Activated CD4-positive, alpha-beta T cell treated with anti-CD3 and anti-CD28 coated beads for 36 hours (primary cell): ENCODE measurements at regions of chr9 and their contacts with region 1.

Region 1: DNA sequence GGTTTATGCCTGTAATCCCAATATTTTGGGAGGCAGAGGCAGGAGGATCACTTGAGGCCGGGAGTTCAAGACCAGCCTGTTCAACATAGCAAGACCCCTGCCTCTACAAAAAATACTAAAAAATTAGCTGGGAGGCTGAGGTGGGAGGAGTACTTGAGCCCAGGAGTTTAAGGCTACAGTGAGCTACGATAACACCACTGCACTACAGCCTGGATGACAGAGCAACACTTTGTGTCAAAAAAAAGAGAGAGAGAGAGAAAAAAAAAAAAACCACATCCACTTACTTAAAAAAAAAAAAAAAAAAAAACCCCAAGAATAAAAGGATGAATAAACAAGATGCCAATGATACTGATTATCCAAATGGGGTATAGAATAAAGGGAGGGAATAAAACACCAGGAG is 14.4 kb downstream of the CARNMT1 start:
- DNase-seq: no peak
- ATAC-seq: no peak
- H3K4me3 Mint-ChIP-seq: no peak overlapping the region
- H3K27ac Mint-ChIP-seq: no peak overlapping the region
- H3K4me1 Mint-ChIP-seq: peaks cover 35% of the 10 kb centered on the region
- H3K27me3 Mint-ChIP-seq: no peaks in the 10 kb centered on the region

Region 2: DNA sequence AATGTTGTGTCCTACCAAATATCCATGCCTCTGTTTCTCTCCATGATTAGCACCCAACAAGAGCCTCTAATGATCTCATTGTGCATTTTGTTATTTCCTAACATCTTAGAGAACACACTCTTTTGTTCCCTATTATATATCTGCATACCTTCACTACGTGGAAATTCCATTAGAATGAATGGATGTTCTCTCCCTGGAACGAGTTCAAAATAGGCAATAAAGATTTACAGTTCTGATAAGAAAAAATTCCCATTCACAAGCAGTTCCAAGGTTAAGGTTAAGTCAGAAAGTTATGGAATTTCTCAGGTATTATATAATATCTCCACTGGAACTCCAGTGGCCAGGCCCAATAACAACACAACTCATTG is 209.7 kb before region 1 on chr9:
- CTCF ChIA-PET with region 1: no interaction called
- POLR2A ChIA-PET with region 1: no interaction called
- intact Hi-C with region 1: no loop called
- DNase-seq: no peak
- ATAC-seq: no peak
- H3K4me3 Mint-ChIP-seq: no peak overlapping the region
- H3K27ac Mint-ChIP-seq: no peak overlapping the region
- H3K4me1 Mint-ChIP-seq: no peaks in the 10 kb centered on the region
- H3K27me3 Mint-ChIP-seq: peaks cover 15% of the 10 kb centered on the region

Region 3: DNA sequence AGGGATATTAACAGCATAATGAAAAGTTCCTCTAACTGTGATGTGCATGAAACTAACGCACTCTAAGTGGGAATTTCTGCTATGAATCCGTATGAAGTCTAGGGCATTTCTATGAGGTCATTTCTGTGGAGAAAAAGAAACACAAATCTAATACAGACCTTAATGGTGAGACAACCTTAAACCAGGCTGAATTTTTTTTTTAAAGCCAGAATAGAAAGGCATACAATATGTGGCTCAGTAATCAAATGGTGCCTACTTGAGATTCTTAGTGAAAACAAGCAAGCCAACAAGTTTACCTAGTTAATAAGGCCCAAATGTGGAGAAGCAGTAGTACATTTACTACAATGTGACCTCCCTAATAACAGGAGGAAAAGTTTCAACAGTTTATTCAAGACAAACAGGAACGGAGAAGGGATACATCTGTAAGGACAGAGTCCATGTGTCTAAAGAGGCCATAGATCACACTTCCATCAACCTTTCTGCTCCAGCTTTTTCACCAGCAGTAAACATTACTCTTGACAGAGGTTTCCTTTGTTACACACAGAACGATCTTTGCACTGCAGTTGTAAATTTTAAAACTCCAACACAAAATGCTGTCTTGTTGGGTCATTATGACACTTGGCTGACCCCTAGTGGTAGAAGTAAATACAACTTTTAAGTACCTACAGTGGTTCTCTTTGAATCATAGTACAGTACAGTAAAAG is 11.9 kb before region 1 on chr9:
- CTCF ChIA-PET with region 1: interaction called, 10 read pairs
- POLR2A ChIA-PET with region 1: no interaction called
- intact Hi-C with region 1: no loop called
- DNase-seq: no peak
- ATAC-seq: peak; percentile 92
- H3K4me3 Mint-ChIP-seq: no peak overlapping the region
- H3K27ac Mint-ChIP-seq: no peak overlapping the region
- H3K4me1 Mint-ChIP-seq: peaks cover 2% of the 10 kb centered on the region
- H3K27me3 Mint-ChIP-seq: no peaks in the 10 kb centered on the region